MCF 10A (cell line): ENCODE measurements at regions of chr4 and their contacts with region 1.

Region 1: DNA sequence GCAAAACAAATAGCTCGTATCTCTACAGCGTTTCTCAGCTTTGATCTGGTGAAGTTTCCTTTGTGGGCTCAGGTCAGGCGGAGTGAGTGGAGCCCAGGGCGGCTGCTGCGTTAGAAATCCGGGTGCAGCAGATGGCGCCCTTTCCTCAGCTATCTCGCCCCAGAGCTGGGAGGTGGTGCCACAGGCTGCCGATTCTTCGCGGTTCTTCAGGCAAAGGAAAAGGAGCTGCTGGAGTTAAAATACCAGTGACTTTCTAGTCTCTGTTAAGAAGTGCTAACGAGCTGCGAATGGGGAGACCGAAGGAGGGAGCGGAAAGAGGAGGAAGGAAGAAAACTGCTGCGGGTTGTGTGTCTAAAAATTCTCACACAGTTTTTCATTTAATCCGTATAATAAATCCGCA is 114.6 kb downstream of the CPE start:
- DNase-seq: peak; percentile 74
- H3K4me3 Mint-ChIP-seq: no peak overlapping the region
- H3K27ac Mint-ChIP-seq: no peak overlapping the region
- H3K4me1 Mint-ChIP-seq: peaks cover 12% of the 10 kb centered on the region
- H3K27me3 Mint-ChIP-seq: no peaks in the 10 kb centered on the region
- CTCF ChIP-seq: peak; percentile 72

Region 2: GRCh38 chr4:165516281-165516833 is 23.0 kb after region 1 on chr4:
- CTCF ChIA-PET with region 1: interaction called, 23 read pairs
- POLR2A ChIA-PET with region 1: interaction called, 8 read pairs
- intact Hi-C with region 1: no loop called
- DNase-seq: no peak
- H3K4me3 Mint-ChIP-seq: no peak overlapping the region
- H3K27ac Mint-ChIP-seq: no peak overlapping the region
- H3K4me1 Mint-ChIP-seq: peaks cover 11% of the 10 kb centered on the region
- H3K27me3 Mint-ChIP-seq: no peaks in the 10 kb centered on the region
- CTCF ChIP-seq: no peak

Region 3: DNA sequence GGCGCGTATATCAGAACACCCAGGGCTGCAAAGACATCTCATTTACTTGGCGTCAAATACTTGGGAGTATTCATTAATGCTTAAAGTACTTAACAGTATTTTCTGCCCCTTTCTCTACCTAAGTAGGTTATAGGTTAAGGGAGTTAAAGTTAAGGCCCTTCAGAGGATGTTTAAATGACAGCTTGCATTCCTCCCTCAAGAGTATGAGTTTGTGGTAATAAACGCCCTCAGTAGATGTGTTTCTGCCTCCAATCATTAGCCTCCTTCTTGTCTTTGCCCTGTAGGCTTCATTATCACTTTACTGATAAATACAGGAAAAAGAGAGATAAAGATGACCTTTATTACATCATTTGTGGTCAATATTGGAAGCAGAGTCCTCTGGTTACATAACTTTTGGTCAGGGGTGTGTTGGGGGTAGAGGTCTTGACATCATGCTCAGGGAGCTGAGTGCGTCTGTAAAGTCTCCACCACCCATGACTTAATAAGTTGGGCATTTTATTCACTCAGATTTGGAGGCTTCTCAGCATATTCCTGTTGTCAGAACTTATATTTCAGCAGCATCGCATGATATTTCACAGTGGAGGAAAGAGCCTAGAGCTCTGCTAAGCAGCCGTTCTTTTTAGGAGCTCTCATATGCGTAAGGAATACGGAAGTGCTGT is 31.3 kb after region 1 on chr4:
- CTCF ChIA-PET with region 1: interaction called, 20 read pairs
- POLR2A ChIA-PET with region 1: interaction called, 4 read pairs
- intact Hi-C with region 1: no loop called
- DNase-seq: no peak
- H3K4me3 Mint-ChIP-seq: no peak overlapping the region
- H3K27ac Mint-ChIP-seq: no peak overlapping the region
- H3K4me1 Mint-ChIP-seq: peaks cover 11% of the 10 kb centered on the region
- H3K27me3 Mint-ChIP-seq: no peaks in the 10 kb centered on the region
- CTCF ChIP-seq: no peak

Region 4: DNA sequence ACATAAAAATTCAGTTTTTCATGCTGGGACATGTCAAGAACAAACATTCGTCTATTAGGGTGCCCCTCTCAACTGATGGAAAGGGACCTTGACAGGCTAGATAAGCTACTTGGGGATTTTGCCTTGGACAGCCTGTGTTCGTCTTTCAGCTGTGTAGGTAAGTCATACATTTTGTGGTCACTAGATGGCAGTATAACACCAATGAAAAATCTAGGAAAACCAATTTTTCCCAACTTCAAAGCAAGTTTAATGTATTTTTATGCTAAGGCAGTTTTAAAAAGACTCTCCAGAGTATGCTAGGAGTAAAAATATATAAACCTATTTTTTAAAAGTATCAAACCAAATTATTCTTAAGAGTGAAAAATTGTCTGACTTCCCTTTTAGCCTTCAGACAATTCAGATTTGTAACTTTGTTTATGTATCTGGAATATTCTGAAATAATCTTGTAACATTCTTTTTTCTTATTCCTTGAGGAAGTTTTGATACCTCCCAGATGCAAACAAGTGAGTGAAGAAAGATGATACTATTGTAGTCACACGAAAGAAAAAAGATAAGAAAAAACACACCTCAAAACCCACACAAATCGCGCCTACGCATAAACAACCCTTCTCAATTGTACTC is 43.8 kb after region 1 on chr4:
- CTCF ChIA-PET with region 1: interaction called, 53 read pairs
- POLR2A ChIA-PET with region 1: interaction called, 7 read pairs
- intact Hi-C with region 1: loop called (anchors 1 kb)
- DNase-seq: peak; percentile 58
- H3K4me3 Mint-ChIP-seq: no peak overlapping the region
- H3K27ac Mint-ChIP-seq: no peak overlapping the region
- H3K4me1 Mint-ChIP-seq: no peaks in the 10 kb centered on the region
- H3K27me3 Mint-ChIP-seq: no peaks in the 10 kb centered on the region
- CTCF ChIP-seq: peak; percentile 63

Region 5: GRCh38 chr4:165855191-165855590 is 361.8 kb after region 1 on chr4:
- CTCF ChIA-PET with region 1: interaction called, 13 read pairs
- POLR2A ChIA-PET with region 1: interaction called, 4 read pairs
- intact Hi-C with region 1: loop called (anchors 5 kb)
- DNase-seq: no peak
- H3K4me3 Mint-ChIP-seq: no peak overlapping the region
- H3K27ac Mint-ChIP-seq: no peak overlapping the region
- H3K4me1 Mint-ChIP-seq: no peaks in the 10 kb centered on the region
- H3K27me3 Mint-ChIP-seq: no peaks in the 10 kb centered on the region
- CTCF ChIP-seq: no peak

Region 6: DNA sequence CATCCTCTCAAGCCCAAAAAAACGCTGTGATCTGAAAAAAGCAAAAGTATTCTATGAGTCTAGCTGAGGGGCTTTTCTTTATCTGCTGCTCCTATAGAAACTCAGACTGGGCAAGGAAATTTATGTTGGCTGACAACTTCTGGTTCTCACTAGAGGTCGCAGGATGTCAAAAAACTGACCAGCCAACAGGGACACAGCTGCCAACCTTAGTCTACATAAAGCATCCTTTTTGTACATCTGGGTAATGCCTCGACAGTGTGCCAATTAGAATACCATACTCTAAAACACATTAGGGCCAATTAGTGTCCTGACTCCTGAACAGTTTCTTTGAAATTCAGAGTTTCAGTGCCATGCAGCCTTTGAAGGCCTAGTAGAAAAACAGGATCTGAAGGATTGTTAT is 370.9 kb after region 1 on chr4:
- CTCF ChIA-PET with region 1: interaction called, 14 read pairs
- POLR2A ChIA-PET with region 1: no interaction called
- intact Hi-C with region 1: loop called (anchors 5 kb)
- DNase-seq: peak; percentile 39
- H3K4me3 Mint-ChIP-seq: no peak overlapping the region
- H3K27ac Mint-ChIP-seq: no peak overlapping the region
- H3K4me1 Mint-ChIP-seq: no peaks in the 10 kb centered on the region
- H3K27me3 Mint-ChIP-seq: no peaks in the 10 kb centered on the region
- CTCF ChIP-seq: peak; percentile 22

Region 7: GRCh38 chr4:166091912-166092510 is 598.7 kb after region 1 on chr4:
- CTCF ChIA-PET with region 1: interaction called, 24 read pairs
- POLR2A ChIA-PET with region 1: interaction called, 4 read pairs
- intact Hi-C with region 1: loop called (anchors 1 kb)
- DNase-seq: peak; percentile 60
- H3K4me3 Mint-ChIP-seq: no peak overlapping the region
- H3K27ac Mint-ChIP-seq: no peak overlapping the region
- H3K4me1 Mint-ChIP-seq: no peaks in the 10 kb centered on the region
- H3K27me3 Mint-ChIP-seq: no peaks in the 10 kb centered on the region
- CTCF ChIP-seq: peak; percentile 63